ENCODE measurements at regions of chr4 and their contacts with region 1.

Region 1: GRCh38 chr4:173420324-173420752 is 21.4 kb upstream of the SCRG1 start:
- DNase-seq: peak; percentile 18 to 26 (median 20)
- ATAC-seq: peak; percentile 62
- H3K4me3 ChIP-seq: no peak overlapping the region
- H3K27ac ChIP-seq: no peak overlapping the region
- H3K4me1 ChIP-seq: no peaks in the 10 kb centered on the region
- H3K27me3 ChIP-seq: no peaks in the 10 kb centered on the region
- CTCF ChIP-seq: peak; percentile 26 to 64 (median 39); a peak in 4 of 6 replicates
- EP300 ChIP-seq: no peak
- POLR2A ChIP-seq: no peak
- RAD21 ChIP-seq: peak; percentile 64 to 68

Region 2: DNA sequence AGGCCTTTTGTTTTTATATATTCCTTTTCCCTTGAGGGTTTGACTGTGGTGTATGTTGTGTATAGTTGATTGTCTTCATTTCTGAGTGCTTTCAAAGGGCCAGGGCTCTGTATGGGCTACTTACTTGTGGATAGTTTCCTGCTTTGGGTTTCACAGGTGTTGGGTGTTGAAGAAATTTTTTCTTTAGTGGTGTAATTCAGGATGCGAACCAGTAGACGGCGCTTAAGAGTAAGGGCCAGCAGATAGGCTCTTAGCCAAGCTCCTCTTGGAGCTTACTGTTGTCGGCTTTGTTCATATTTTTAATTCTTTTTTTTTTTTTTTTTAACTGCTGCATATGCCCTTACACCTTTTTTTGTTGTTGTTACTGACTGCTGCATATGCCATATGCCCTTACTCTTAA is 528.0 kb before region 1 on chr4:
- CTCF ChIA-PET with region 1: no interaction called
- POLR2A ChIA-PET with region 1: no interaction called
- in situ Hi-C with region 1: no loop called
- intact Hi-C with region 1: loop called (anchors 10 kb)
- DNase-seq: peak; percentile 17 to 45 (median 27)
- ATAC-seq: peak; percentile 80
- H3K4me3 ChIP-seq: no peak overlapping the region
- H3K27ac ChIP-seq: no peak overlapping the region
- H3K4me1 ChIP-seq: no peaks in the 10 kb centered on the region
- H3K27me3 ChIP-seq: no peaks in the 10 kb centered on the region
- CTCF ChIP-seq: peak; percentile 56 to 71 (median 70)
- EP300 ChIP-seq: no peak
- POLR2A ChIP-seq: no peak
- RAD21 ChIP-seq: peak; percentile 8 to 60; a peak in 2 of 4 replicates

Region 3: GRCh38 chr4:173019711-173020110 is 400.6 kb before region 1 on chr4:
- CTCF ChIA-PET with region 1: no interaction called
- POLR2A ChIA-PET with region 1: no interaction called
- in situ Hi-C with region 1: loop called (anchors 5 kb)
- intact Hi-C with region 1: loop called (anchors 2 kb)
- DNase-seq: no peak
- ATAC-seq: no peak
- H3K4me3 ChIP-seq: no peak overlapping the region
- H3K27ac ChIP-seq: no peak overlapping the region
- H3K4me1 ChIP-seq: no peaks in the 10 kb centered on the region
- H3K27me3 ChIP-seq: no peaks in the 10 kb centered on the region; a peak in 1 of 5 replicates
- CTCF ChIP-seq: no peak
- EP300 ChIP-seq: no peak
- POLR2A ChIP-seq: no peak
- RAD21 ChIP-seq: no peak

Region 4: DNA sequence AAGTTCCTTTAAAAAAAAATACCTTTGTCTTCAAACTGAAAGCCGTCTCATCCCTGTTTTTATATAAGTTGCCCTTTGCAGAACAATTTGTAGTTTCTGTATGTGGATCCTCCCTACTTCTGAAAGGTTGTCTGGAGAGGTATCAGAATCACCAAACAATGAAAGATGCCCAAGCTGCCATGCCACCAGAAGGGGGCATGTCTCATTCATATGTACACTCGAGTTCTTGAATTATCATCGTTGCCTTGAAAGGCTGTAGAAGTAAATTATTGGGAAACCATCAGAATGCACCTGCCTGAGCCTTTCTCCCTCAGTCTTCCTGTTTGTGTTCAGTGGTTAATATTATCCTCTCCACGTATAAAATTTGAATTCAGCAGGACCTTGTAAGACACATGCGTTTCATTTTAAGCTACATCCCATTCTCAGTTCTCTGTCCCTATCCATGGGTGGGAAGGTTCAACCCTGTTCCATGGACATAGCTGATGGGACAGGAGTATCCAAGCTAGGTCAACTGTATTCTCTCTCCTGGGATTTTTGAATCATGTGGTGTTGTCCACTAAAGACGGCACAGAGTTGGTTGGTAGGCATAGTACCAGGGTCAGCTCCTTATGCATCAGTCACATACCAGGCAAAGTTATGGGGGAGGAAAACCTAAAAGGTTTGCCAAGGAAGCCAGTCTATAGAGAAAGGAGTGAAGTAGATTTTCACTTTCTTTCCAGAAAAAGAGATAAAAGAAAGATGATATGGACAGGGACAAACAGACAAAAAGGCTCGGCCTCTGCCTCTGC is 227.8 kb before region 1 on chr4:
- CTCF ChIA-PET with region 1: no interaction called
- POLR2A ChIA-PET with region 1: no interaction called
- in situ Hi-C with region 1: no loop called
- intact Hi-C with region 1: no loop called
- DNase-seq: no peak
- ATAC-seq: no peak
- H3K4me3 ChIP-seq: no peak overlapping the region
- H3K27ac ChIP-seq: no peak overlapping the region
- H3K4me1 ChIP-seq: peaks cover 3 to 19% of the 10 kb centered on the region in 2 experiments; a peak in 2 of 5 replicates
- H3K27me3 ChIP-seq: no peaks in the 10 kb centered on the region
- CTCF ChIP-seq: no peak
- EP300 ChIP-seq: no peak
- POLR2A ChIP-seq: no peak
- RAD21 ChIP-seq: no peak

Region 5: GRCh38 chr4:173288296-173288695 is 132.0 kb before region 1 on chr4:
- CTCF ChIA-PET with region 1: no interaction called
- POLR2A ChIA-PET with region 1: no interaction called
- in situ Hi-C with region 1: no loop called
- intact Hi-C with region 1: loop called (anchors 1 kb)
- DNase-seq: peak; percentile 39 to 86 (median 45)
- ATAC-seq: peak; percentile 83
- H3K4me3 ChIP-seq: no peak overlapping the region
- H3K27ac ChIP-seq: peak overlapping the region; percentile 53; the same call in 1 of the 3 replicates
- H3K4me1 ChIP-seq: peaks cover 0 to 15% of the 10 kb centered on the region in 2 experiments; a peak in 3 of 5 replicates
- H3K27me3 ChIP-seq: no peaks in the 10 kb centered on the region
- CTCF ChIP-seq: peak; percentile 45 to 70 (median 68)
- EP300 ChIP-seq: no peak
- POLR2A ChIP-seq: no peak
- RAD21 ChIP-seq: peak; percentile 41 to 52

Region 6: DNA sequence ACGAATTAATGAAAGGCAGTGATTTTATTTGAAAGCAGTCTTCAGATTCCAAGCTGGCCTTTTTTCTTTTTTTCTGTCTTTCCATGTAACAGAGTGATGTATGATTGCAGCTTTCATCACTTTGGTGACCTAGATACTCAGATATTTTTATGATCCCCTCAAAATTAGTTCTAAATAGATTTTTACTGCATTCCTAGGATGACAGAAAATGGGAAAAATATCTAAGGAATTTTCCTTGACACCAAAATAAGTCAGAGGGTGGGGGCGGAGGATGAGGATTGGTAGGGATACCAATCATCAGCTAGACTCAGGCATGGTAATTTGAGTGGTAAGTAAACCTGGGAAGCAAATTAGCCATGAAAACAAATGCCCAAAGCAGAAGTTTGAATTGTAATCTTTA is 74.3 kb before region 1 on chr4:
- CTCF ChIA-PET with region 1: no interaction called
- POLR2A ChIA-PET with region 1: no interaction called
- in situ Hi-C with region 1: no loop called
- intact Hi-C with region 1: no loop called
- DNase-seq: no peak
- ATAC-seq: no peak
- H3K4me3 ChIP-seq: no peak overlapping the region
- H3K27ac ChIP-seq: no peak overlapping the region
- H3K4me1 ChIP-seq: no peaks in the 10 kb centered on the region
- H3K27me3 ChIP-seq: no peaks in the 10 kb centered on the region
- CTCF ChIP-seq: no peak
- EP300 ChIP-seq: no peak
- POLR2A ChIP-seq: no peak
- RAD21 ChIP-seq: no peak

Region 7: DNA sequence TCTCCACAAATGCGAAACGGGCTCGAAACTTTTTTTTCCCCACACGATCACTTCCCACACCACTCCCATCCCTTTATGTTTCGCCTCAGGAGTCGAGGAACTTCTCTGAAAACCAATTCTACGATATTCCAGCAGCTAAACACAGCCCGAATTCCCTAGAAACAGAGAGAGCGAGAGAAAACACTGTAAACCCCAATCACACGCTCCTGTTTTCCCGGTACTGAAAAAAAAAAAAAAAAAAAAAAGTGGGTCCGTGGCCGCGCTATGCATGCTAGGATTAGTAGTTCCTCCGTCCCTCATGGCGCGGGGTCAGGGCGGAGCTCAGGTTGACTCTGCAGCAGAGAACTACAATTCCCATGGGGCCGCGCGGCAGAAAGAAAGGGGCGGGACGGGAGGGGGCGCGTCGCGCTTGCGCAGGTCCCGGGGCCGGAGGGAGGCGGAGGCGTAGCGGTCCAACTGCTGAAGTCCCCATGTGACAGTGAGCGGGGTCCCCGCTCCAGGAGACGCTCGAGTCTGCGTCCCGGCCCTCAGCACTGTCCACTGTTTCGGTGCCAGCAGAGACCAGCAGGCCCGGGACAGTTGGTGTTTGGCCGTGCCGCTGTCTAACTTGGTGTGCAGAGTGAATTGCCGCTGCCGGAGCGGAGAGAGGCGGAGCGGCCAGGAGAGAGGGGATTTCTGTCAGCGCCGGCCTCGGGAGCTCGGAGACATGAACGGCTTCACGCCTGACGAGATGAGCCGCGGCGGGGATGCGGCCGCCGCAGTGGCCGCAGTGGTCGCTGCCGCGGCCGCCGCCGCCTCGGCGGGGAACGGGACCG is 49.7 kb before region 1 on chr4 and contains the start of gene SAP30:
- CTCF ChIA-PET with region 1: no interaction called
- POLR2A ChIA-PET with region 1: no interaction called
- in situ Hi-C with region 1: no loop called
- intact Hi-C with region 1: loop called (anchors 2 kb)
- DNase-seq: peak; percentile 96 to 98 (median 97)
- ATAC-seq: peak; percentile 89
- H3K4me3 ChIP-seq: peak within 1 kb of the TSS; percentile 81
- H3K27ac ChIP-seq: peak within 1 kb of the TSS; percentile 94
- H3K4me1 ChIP-seq: peaks cover 3 to 6% of the 10 kb centered on the region in 2 experiments; a peak in 3 of 5 replicates
- H3K27me3 ChIP-seq: no peaks in the 10 kb centered on the region
- CTCF ChIP-seq: no peak
- EP300 ChIP-seq: no peak
- POLR2A ChIP-seq: peak; percentile 86
- RAD21 ChIP-seq: no peak
- polyA plus RNA-seq, gene SAP30: 5.9 to 6.9 TPM

Region 8: GRCh38 chr4:173403051-173403450 is 17.3 kb before region 1 on chr4:
- CTCF ChIA-PET with region 1: no interaction called
- POLR2A ChIA-PET with region 1: no interaction called
- in situ Hi-C with region 1: no loop called
- intact Hi-C with region 1: no loop called
- DNase-seq: no peak
- ATAC-seq: no peak
- H3K4me3 ChIP-seq: no peak overlapping the region
- H3K27ac ChIP-seq: no peak overlapping the region
- H3K4me1 ChIP-seq: no peaks in the 10 kb centered on the region
- H3K27me3 ChIP-seq: peaks cover 0 to 2% of the 10 kb centered on the region in 2 experiments; a peak in 1 of 5 replicates
- CTCF ChIP-seq: no peak
- EP300 ChIP-seq: no peak
- POLR2A ChIP-seq: no peak
- RAD21 ChIP-seq: no peak

Region 9: GRCh38 chr4:173494013-173494970 is 74.0 kb after region 1 on chr4:
- CTCF ChIA-PET with region 1: interaction called, 8 read pairs
- POLR2A ChIA-PET with region 1: interaction called, 3 read pairs
- in situ Hi-C with region 1: loop called (anchors 5 kb)
- intact Hi-C with region 1: loop called (anchors 1 kb)
- DNase-seq: peak; percentile 27 to 71 (median 47)
- ATAC-seq: peak; percentile 97
- H3K4me3 ChIP-seq: peak overlapping the region; percentile 10
- H3K27ac ChIP-seq: no peak overlapping the region
- H3K4me1 ChIP-seq: no peaks in the 10 kb centered on the region; a peak in 1 of 5 replicates
- H3K27me3 ChIP-seq: no peaks in the 10 kb centered on the region
- CTCF ChIP-seq: peak; percentile 80 to 94 (median 82)
- EP300 ChIP-seq: no peak
- POLR2A ChIP-seq: no peak
- RAD21 ChIP-seq: peak; percentile 58 to 77

Region 10: DNA sequence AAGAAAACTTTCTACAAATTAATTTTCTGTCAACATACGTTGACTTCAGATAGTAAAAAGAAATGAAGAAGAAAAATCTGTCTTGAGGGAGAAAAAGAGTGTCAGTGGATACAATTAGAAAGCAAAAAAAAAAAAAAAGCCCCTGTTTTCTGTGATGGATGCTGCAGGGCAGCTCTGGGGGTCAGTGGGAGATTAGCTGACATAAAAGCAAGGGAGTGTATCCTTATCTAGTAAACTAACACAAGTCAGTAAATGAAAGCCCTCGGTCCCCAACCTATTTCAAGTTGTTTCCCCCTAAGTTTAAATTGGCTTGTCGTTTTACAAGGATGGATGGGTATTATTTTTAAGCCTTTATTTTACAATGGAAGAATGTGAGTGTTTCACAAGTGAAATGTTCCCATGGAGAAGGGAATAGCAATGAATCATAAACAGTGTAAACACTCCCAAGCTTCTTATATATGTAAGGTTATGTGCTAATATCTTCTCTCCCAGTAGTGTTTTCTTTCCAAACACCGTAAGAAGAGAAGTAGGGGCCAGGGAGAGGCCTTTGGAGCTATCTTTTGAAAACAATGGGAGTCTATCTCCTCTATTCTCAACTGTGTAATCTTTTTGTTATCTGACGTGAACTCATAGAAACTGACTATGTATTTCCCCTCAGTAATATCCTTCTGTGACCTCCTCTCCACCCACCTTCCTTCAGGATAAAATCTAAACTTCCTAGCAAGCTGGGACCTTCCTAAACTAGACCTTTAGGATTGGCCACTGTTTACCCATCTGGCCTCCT is 515.5 kb after region 1 on chr4:
- CTCF ChIA-PET with region 1: no interaction called
- POLR2A ChIA-PET with region 1: no interaction called
- in situ Hi-C with region 1: no loop called
- intact Hi-C with region 1: no loop called
- DNase-seq: no peak
- ATAC-seq: no peak
- H3K4me3 ChIP-seq: no peak overlapping the region
- H3K27ac ChIP-seq: no peak overlapping the region
- H3K4me1 ChIP-seq: no peaks in the 10 kb centered on the region
- H3K27me3 ChIP-seq: no peaks in the 10 kb centered on the region
- CTCF ChIP-seq: no peak
- EP300 ChIP-seq: no peak
- POLR2A ChIP-seq: no peak
- RAD21 ChIP-seq: no peak

Measured in K562 (cell line).